Activated CD4-positive, alpha-beta T cell treated with anti-CD3 and anti-CD28 coated beads for 36 hours (primary cell): ENCODE measurements at regions of chr10 and their contacts with region 1.

Region 1: DNA sequence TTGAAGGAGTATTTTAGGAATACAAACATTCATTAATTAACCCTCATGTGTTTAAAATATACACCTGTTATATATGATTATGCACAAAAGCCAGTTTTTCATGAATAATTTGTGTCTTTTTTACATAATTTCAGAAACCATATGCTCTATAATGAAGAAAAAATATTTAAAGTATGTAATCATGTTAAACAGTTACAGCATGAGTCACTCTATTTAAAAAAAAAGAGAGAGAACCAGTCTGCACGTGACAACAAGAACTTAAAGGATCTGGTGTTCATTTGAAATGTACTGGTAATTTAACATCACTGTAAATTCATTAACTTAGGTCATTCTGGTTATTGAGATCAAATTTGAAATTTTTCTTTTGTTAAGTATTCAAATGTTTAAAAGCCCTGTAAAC is 228.5 kb downstream of the CACNB2 start:
- DNase-seq: no peak
- ATAC-seq: no peak
- H3K4me3 Mint-ChIP-seq: no peak overlapping the region
- H3K27ac Mint-ChIP-seq: no peak overlapping the region
- H3K4me1 Mint-ChIP-seq: no peaks in the 10 kb centered on the region
- H3K27me3 Mint-ChIP-seq: peaks cover 2% of the 10 kb centered on the region

Region 2: GRCh38 chr10:18351421-18351820 is 17.3 kb before region 1 on chr10:
- CTCF ChIA-PET with region 1: no interaction called
- POLR2A ChIA-PET with region 1: no interaction called
- intact Hi-C with region 1: no loop called
- DNase-seq: no peak
- ATAC-seq: no peak
- H3K4me3 Mint-ChIP-seq: no peak overlapping the region
- H3K27ac Mint-ChIP-seq: no peak overlapping the region
- H3K4me1 Mint-ChIP-seq: no peaks in the 10 kb centered on the region
- H3K27me3 Mint-ChIP-seq: peaks cover 2% of the 10 kb centered on the region

Region 3: GRCh38 chr10:18418541-18419215 is 50.0 kb after region 1 on chr10:
- CTCF ChIA-PET with region 1: no interaction called
- POLR2A ChIA-PET with region 1: no interaction called
- intact Hi-C with region 1: loop called in 1 of 2 experiments (anchors 5 kb)
- DNase-seq: no peak
- ATAC-seq: no peak
- H3K4me3 Mint-ChIP-seq: no peak overlapping the region
- H3K27ac Mint-ChIP-seq: no peak overlapping the region
- H3K4me1 Mint-ChIP-seq: no peaks in the 10 kb centered on the region
- H3K27me3 Mint-ChIP-seq: peaks cover 5% of the 10 kb centered on the region

Region 4: DNA sequence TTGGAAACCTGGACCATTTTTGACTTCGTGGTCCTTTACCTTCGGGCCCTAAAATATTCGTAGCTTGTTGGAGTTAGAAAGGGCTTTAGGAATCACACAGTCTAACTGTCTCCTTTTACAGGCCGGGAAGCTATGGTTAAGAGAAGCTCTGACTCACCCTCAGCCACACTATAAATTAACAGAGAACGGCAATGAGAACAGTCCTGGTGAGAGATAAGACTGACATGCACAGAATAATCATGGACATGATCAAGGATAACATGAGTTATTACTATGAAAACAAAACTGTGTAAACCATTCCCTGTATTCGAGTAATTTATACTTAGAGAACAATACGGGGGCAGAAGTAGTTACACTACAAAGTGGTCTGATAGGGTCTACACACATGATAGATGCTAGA is 517.4 kb after region 1 on chr10:
- CTCF ChIA-PET with region 1: no interaction called
- POLR2A ChIA-PET with region 1: no interaction called
- intact Hi-C with region 1: no loop called
- DNase-seq: no peak
- ATAC-seq: no peak
- H3K4me3 Mint-ChIP-seq: no peak overlapping the region
- H3K27ac Mint-ChIP-seq: no peak overlapping the region
- H3K4me1 Mint-ChIP-seq: no peaks in the 10 kb centered on the region
- H3K27me3 Mint-ChIP-seq: no peaks in the 10 kb centered on the region